ENCODE measurements at regions of chr19 and their contacts with region 1.

Region 1: GRCh38 chr19:39497996-39498797 is 550 bp upstream of the DLL3 start:
- DNase-seq: no peak
- H3K4me3 ChIP-seq: peak overlapping the region in 2 of 4 donors; percentile 6 to 17
- H3K27ac ChIP-seq: no peak overlapping the region
- H3K4me1 ChIP-seq: peaks cover 0 to 27% (median 22%) of the 10 kb centered on the region in 4 donors
- H3K27me3 ChIP-seq: peaks cover 21 to 71% (median 55%) of the 10 kb centered on the region in 3 donors
- CTCF ChIP-seq: peak in 1 of 4 experiments; percentile 25
- EP300 ChIP-seq: no peak
- POLR2A ChIP-seq: no peak

Region 2: DNA sequence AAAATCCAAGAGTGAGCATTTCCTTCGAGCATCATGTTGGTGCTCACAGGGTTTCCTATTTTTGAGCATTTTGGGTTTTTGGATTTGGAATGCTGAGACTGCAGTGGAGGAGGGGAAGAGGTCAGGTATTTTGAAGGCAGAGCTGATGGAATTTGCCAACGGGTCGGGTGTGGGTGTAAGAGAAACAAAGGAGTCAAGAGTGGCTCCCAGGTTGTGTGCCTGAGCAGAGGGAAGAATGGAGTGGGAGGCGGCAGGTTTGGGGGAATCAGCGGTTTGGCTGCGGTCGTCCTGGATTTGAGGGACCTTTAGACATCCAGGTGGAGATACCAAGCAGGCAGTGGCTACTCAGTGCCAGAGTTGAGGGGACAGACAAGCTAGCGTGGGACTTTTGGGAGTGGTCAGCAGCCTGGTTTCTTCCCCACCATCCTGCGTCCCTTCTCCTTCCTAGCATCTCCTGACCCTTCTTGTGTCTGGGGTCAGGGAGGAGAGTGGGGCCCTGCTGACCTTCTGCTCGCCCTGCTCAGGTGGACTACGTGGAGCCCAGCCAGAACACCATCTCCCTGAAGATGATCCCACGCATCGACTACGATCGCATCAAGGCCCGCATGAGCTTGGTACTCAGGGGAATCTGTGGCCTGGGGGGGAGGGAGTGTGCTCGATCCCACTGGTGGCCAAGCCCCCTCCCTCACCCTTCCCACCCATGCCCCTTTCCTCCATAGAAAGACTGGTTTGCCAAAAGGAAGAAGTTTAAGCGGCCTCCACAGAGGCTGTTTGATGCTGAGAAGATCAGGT is 32.0 kb before region 1 on chr19:
- intact Hi-C with region 1: no loop called
- DNase-seq: no peak
- H3K4me3 ChIP-seq: no peak overlapping the region
- H3K27ac ChIP-seq: no peak overlapping the region
- H3K4me1 ChIP-seq: no peaks in the 10 kb centered on the region
- H3K27me3 ChIP-seq: no peaks in the 10 kb centered on the region
- CTCF ChIP-seq: no peak
- EP300 ChIP-seq: no peak
- POLR2A ChIP-seq: no peak

Region 3: DNA sequence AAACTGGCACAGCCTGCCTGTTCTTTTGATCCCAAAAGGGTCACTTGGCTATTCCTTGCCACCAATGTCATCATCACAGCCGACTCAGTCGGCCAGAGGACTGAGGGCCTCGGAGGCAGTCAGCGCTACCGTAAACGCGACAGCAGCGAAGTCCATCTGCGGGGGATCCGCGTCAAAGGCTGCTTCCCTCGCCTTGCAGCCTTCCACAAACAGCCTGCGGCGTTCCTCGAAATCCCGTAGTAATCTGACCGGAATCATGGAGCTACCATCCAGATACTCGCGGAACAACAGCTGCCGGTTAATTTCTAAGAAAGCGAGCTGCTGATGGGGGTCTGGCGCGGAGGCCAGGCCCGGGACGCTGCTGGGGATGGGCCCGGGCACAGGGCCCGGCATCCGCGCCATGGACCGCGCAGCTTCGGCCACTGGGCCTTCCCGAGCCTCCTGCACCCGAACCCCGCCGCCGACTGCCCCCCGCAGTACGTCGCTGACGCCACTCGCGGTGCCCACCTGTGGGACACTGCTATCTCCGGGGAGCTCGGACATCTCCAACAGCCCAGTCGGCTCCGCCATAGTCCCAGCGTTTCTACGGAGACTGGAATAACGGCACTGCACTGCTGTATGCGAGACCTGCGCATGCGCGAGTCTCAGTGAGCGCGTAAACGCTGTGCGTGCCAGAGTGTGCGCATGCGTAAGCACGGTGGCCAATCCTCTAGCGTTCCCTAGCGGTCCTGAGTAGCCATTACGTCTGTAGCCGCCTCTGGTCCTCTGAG is 34.2 kb after region 1 on chr19 and contains the start of gene EID2B:
- intact Hi-C with region 1: loop called (anchors 5 kb)
- DNase-seq: peak; percentile 98
- H3K4me3 ChIP-seq: peak within 1 kb of the TSS; percentile 70 to 89 (median 78)
- H3K27ac ChIP-seq: peak within 1 kb of the TSS; percentile 86 to 94 (median 92)
- H3K4me1 ChIP-seq: peaks cover 0 to 26% (median 13%) of the 10 kb centered on the region in 4 donors
- H3K27me3 ChIP-seq: no peaks in the 10 kb centered on the region
- CTCF ChIP-seq: peak; percentile 94 to 99 (median 98)
- EP300 ChIP-seq: no peak
- POLR2A ChIP-seq: peak; percentile 44 to 74
- total RNA-seq, gene EID2B: 3.9 to 7.7 (median 5.3) TPM

Measured in sigmoid colon (tissue), 7 donors.